ENCODE measurements at regions of chr7 and their contacts with region 1.

Region 1: DNA sequence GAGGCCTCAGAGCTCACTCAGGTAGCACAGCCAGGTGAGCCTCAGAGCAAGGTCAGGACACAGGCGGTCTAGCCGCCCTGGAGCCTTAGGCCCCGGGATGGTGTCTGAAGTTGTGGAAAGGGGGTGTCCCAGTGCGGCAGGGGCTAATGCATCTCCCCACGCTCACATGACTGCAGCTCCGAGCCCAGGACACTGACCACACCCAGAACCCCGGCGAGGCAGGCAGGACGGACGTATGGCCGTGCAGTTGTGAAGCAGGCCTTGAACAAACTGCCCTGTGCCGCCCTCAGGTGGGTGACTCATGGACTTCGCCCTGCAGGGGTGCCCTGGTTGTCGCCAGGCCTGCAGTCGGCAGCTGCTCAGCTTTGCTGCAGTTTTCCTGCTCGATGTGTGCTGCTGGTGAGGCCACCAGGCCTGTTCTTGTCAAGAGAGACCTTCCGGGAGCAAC is 5.0 kb upstream of the PRKAR1B start:
- DNase-seq: no peak
- H3K4me3 ChIP-seq: no peak overlapping the region
- H3K27ac ChIP-seq: peak overlapping the region in 1 of 4 donors; percentile 18
- H3K4me1 ChIP-seq: peaks cover 8 to 31% (median 9%) of the 10 kb centered on the region in 3 donors
- H3K27me3 ChIP-seq: no peaks in the 10 kb centered on the region
- CTCF ChIP-seq: peak in 4 of 6 experiments; percentile 7 to 46 (median 21)
- POLR2A ChIP-seq: no peak

Region 2: GRCh38 chr7:542713-543500 is 189.2 kb before region 1 on chr7:
- intact Hi-C with region 1: loop called (anchors 10 kb)
- DNase-seq: no peak
- H3K4me3 ChIP-seq: no peak overlapping the region
- H3K27ac ChIP-seq: peak overlapping the region in 2 of 4 donors; percentile 56 to 60
- H3K4me1 ChIP-seq: peaks cover 28 to 41% (median 33%) of the 10 kb centered on the region in 3 donors
- H3K27me3 ChIP-seq: no peaks in the 10 kb centered on the region
- CTCF ChIP-seq: no peak
- POLR2A ChIP-seq: no peak